Naive thymus-derived CD4-positive, alpha-beta T cell (primary cell): ENCODE measurements at regions of chr4 and their contacts with region 1.

Region 1: GRCh38 chr4:86895692-86896488 is 3.7 kb upstream of the C4orf36 start:
- DNase-seq: peak in 5 of 9 donors; percentile 32 to 55 (median 47)
- ATAC-seq: peak; percentile 68
- H3K4me3 ChIP-seq: no peak overlapping the region
- H3K4me3 Mint-ChIP-seq: no peak overlapping the region
- H3K27ac ChIP-seq: no peak overlapping the region
- H3K27ac Mint-ChIP-seq: no peak overlapping the region
- H3K4me1 ChIP-seq: peaks cover 0 to 8% of the 10 kb centered on the region in 2 donors
- H3K4me1 Mint-ChIP-seq: peaks cover 0 to 12% (median 7%) of the 10 kb centered on the region in 7 donors
- H3K27me3 ChIP-seq: peaks cover 0 to 3% of the 10 kb centered on the region in 2 donors
- H3K27me3 Mint-ChIP-seq: peaks cover 16 to 19% (median 17%) of the 10 kb centered on the region in 5 donors

Region 2: DNA sequence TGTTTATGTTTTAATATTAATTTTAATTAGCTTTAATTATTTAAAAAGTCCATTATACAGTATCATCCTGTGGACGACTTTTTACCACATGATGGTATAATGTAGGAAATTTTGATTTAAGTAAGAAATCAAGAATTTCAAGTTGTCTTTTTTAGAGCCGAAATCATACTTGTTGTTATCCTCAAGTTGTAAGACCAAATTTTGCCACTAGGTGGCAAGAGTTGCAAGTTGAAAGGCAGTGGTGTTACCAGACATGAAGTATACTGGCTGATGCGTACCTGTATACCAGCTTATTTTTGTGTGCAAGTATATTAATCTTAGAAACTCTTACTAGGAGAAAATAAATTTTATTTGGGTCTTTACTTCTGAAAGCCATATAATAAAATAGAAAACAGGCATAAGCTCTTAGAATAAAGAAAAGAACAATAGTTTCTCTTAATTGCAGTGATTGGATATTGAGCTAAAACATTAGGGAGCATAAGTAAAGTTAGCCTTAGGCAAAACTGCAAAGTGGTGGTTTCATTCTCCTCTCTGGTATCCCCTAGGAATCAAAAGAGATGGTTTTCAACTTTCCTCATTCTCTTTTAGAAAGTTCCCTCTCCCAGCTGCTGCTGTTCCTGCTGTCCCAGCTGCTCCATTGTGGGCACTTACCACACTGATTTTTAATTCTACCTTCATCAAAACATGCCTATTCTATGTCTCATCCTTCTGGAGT is 1811.4 kb before region 1 on chr4:
- CTCF ChIA-PET with region 1: no interaction called
- POLR2A ChIA-PET with region 1: no interaction called
- intact Hi-C with region 1: loop called in 1 of 2 experiments (anchors 10 kb)
- DNase-seq: peak in 3 of 9 donors; percentile 4 to 23 (median 21)
- ATAC-seq: no peak
- H3K4me3 ChIP-seq: no peak overlapping the region
- H3K4me3 Mint-ChIP-seq: no peak overlapping the region
- H3K27ac ChIP-seq: no peak overlapping the region
- H3K27ac Mint-ChIP-seq: no peak overlapping the region
- H3K4me1 ChIP-seq: no peaks in the 10 kb centered on the region
- H3K4me1 Mint-ChIP-seq: no peaks in the 10 kb centered on the region
- H3K27me3 ChIP-seq: no peaks in the 10 kb centered on the region
- H3K27me3 Mint-ChIP-seq: peaks cover 0 to 2% (median 0%) of the 10 kb centered on the region in 5 donors

Region 3: GRCh38 chr4:86043755-86044592 is 851.9 kb before region 1 on chr4:
- CTCF ChIA-PET with region 1: no interaction called
- POLR2A ChIA-PET with region 1: no interaction called
- intact Hi-C with region 1: loop called in 1 of 2 experiments (anchors 10 kb)
- DNase-seq: peak in 5 of 9 donors; percentile 1 to 19 (median 4)
- ATAC-seq: no peak
- H3K4me3 ChIP-seq: no peak overlapping the region
- H3K4me3 Mint-ChIP-seq: no peak overlapping the region
- H3K27ac ChIP-seq: no peak overlapping the region
- H3K27ac Mint-ChIP-seq: no peak overlapping the region
- H3K4me1 ChIP-seq: no peaks in the 10 kb centered on the region
- H3K4me1 Mint-ChIP-seq: no peaks in the 10 kb centered on the region
- H3K27me3 ChIP-seq: no peaks in the 10 kb centered on the region
- H3K27me3 Mint-ChIP-seq: no peaks in the 10 kb centered on the region

Region 4: GRCh38 chr4:86497980-86498862 is 397.7 kb before region 1 on chr4:
- CTCF ChIA-PET with region 1: interaction called, 6 read pairs
- POLR2A ChIA-PET with region 1: no interaction called
- intact Hi-C with region 1: loop called (anchors 1 kb)
- DNase-seq: peak in 4 of 9 donors; percentile 4 to 26 (median 18)
- ATAC-seq: peak; percentile 78
- H3K4me3 ChIP-seq: no peak overlapping the region
- H3K4me3 Mint-ChIP-seq: no peak overlapping the region
- H3K27ac ChIP-seq: no peak overlapping the region
- H3K27ac Mint-ChIP-seq: no peak overlapping the region
- H3K4me1 ChIP-seq: no peaks in the 10 kb centered on the region
- H3K4me1 Mint-ChIP-seq: peaks cover 0 to 13% (median 0%) of the 10 kb centered on the region in 7 donors
- H3K27me3 ChIP-seq: no peaks in the 10 kb centered on the region
- H3K27me3 Mint-ChIP-seq: peaks cover 9 to 21% (median 12%) of the 10 kb centered on the region in 5 donors

Region 5: DNA sequence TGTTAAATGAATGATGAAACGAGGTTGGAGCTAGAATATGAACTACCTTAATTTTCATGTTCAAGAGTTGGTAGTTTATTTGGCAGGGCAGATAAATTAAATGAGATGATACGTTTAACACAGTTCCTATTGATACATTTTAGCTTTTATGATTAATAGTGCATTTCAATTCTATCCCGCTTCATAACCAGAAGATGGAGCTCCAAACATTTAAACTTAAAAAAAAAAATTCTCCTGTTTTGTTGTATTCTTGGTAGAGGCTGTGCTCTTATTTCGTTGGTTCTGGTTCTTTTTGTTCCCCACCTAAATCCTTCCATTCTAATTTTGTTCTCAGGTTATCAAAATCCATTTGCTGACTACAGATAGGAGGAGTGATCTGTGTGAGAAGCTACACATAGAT is 373.5 kb before region 1 on chr4:
- CTCF ChIA-PET with region 1: no interaction called
- POLR2A ChIA-PET with region 1: no interaction called
- intact Hi-C with region 1: loop called in 1 of 2 experiments (anchors 1 kb)
- DNase-seq: no peak
- ATAC-seq: no peak
- H3K4me3 ChIP-seq: no peak overlapping the region
- H3K4me3 Mint-ChIP-seq: no peak overlapping the region
- H3K27ac ChIP-seq: no peak overlapping the region
- H3K27ac Mint-ChIP-seq: no peak overlapping the region
- H3K4me1 ChIP-seq: no peaks in the 10 kb centered on the region
- H3K4me1 Mint-ChIP-seq: peaks cover 0 to 6% (median 0%) of the 10 kb centered on the region in 7 donors
- H3K27me3 ChIP-seq: no peaks in the 10 kb centered on the region
- H3K27me3 Mint-ChIP-seq: peaks cover 22 to 39% (median 24%) of the 10 kb centered on the region in 5 donors

Region 6: DNA sequence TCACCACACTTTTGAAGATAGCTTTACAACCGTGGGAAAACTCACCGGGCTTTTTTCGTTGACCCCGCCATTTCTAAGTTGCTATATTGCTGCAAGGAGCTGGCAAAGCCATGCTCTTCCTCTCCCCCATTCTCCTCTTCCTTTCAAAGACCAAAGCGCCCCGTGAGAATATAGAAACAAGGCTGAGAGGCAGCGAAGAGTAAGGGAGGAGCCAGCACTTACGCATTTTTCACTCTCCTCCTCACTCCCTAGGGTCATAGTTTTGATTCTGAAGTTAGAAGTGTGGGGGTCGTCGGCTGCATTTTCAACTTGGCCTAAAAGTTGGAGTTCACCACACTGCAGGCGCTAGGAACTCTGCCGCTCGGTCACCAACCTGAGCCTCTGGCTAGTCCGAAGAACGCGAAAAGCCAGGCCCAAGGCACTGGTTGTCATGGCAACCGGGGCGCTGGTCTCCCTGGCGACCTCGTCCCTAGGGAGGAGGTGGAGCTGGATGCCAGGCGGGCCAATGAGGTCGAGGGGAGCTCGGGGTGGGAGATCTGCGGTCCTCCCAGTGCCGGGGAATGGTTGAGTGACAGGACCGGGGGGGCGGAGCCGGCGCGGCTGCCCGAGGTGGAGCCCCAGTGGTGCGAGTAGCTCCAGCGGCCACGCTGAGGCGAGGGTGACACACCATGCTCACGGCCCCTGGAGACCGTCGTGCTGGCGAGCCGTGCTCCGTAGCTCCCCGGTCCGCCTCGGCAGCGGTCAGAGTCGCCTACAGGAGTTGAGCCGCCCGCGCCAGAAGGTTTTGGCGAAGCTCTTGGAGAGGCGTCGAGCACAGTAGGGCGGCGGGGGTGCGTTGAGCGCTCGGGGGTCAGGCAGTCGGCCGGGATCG is 302.0 kb before region 1 on chr4 and contains the start of gene PTPN13:
- CTCF ChIA-PET with region 1: no interaction called
- POLR2A ChIA-PET with region 1: no interaction called
- intact Hi-C with region 1: loop called in 1 of 2 experiments (anchors 5 kb)
- DNase-seq: peak in 6 of 9 donors; percentile 7 to 62 (median 16)
- ATAC-seq: peak; percentile 86
- H3K4me3 ChIP-seq: peak within 1 kb of the TSS; percentile 30
- H3K4me3 Mint-ChIP-seq: peak within 1 kb of the TSS; percentile 59 to 83 (median 79)
- H3K27ac ChIP-seq: no peak within 1 kb of the TSS
- H3K27ac Mint-ChIP-seq: no peak within 1 kb of the TSS
- H3K4me1 ChIP-seq: no peaks in the 10 kb centered on the region
- H3K4me1 Mint-ChIP-seq: peaks cover 5 to 30% (median 17%) of the 10 kb centered on the region in 7 donors
- H3K27me3 ChIP-seq: peaks cover 0 to 9% of the 10 kb centered on the region in 2 donors
- H3K27me3 Mint-ChIP-seq: peaks cover 46 to 62% (median 52%) of the 10 kb centered on the region in 5 donors
- total RNA-seq, gene PTPN13: 0.05 to 4.5 (median 0.21) TPM in 4 of 5 experiments, not detected in the other

Region 7: GRCh38 chr4:87363567-87363966 is 467.7 kb after region 1 on chr4:
- CTCF ChIA-PET with region 1: no interaction called
- POLR2A ChIA-PET with region 1: no interaction called
- intact Hi-C with region 1: no loop called
- DNase-seq: no peak
- ATAC-seq: no peak
- H3K4me3 ChIP-seq: no peak overlapping the region
- H3K4me3 Mint-ChIP-seq: no peak overlapping the region
- H3K27ac ChIP-seq: no peak overlapping the region
- H3K27ac Mint-ChIP-seq: no peak overlapping the region
- H3K4me1 ChIP-seq: no peaks in the 10 kb centered on the region
- H3K4me1 Mint-ChIP-seq: peaks cover 0 to 3% (median 0%) of the 10 kb centered on the region in 7 donors
- H3K27me3 ChIP-seq: no peaks in the 10 kb centered on the region
- H3K27me3 Mint-ChIP-seq: no peaks in the 10 kb centered on the region